Activated naive CD4-positive, alpha-beta T cell treated with anti-CD3 and anti-CD28 coated beads, Interleukin-2, amount 10 ng/mL, durations not matched to agents 7 days and 5 days (primary cell): ENCODE measurements at regions of chr13 and their contacts with region 1.

Region 1: GRCh38 chr13:41054212-41054877 is 7.0 kb upstream of the WBP4 start:
- DNase-seq: peak; percentile 53
- H3K4me3 Mint-ChIP-seq: no peak overlapping the region
- H3K27ac Mint-ChIP-seq: no peak overlapping the region
- H3K4me1 Mint-ChIP-seq: peaks cover 46% of the 10 kb centered on the region
- H3K27me3 Mint-ChIP-seq: no peaks in the 10 kb centered on the region

Region 2: DNA sequence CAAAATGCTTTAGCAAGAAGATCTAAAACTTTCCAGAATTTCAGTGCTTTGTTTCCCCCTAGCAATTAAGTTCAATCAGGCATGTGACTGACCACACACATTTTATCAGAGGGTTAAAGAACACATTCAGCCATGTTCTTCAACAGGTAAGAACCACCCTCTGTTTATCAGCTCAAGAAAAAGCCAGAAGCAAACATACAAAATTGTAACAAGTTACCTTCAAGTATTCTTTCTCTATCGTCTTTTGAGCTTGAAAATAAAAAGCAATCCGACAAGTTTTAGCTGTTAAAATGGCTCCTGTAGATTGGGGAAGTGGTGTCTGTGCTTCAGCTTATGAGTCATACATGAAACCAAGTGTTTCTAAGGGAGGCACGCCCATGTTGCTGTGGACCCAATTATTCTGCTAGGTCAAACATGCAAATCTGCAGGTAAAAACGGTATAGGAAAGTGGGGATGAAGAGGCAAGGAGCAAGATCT is 35.3 kb before region 1 on chr13 and contains the start of gene ELF1:
- CTCF ChIA-PET with region 1: interaction called, 18 read pairs
- DNase-seq: peak; percentile 75
- H3K4me3 Mint-ChIP-seq: peak within 1 kb of the TSS; percentile 96
- H3K27ac Mint-ChIP-seq: peak within 1 kb of the TSS; percentile 99
- H3K4me1 Mint-ChIP-seq: peaks cover 47% of the 10 kb centered on the region
- H3K27me3 Mint-ChIP-seq: no peaks in the 10 kb centered on the region

Region 3: GRCh38 chr13:41222259-41222852 is 168.0 kb after region 1 on chr13:
- CTCF ChIA-PET with region 1: interaction called, 14 read pairs
- DNase-seq: peak; percentile 66
- H3K4me3 Mint-ChIP-seq: no peak overlapping the region
- H3K27ac Mint-ChIP-seq: no peak overlapping the region
- H3K4me1 Mint-ChIP-seq: no peaks in the 10 kb centered on the region
- H3K27me3 Mint-ChIP-seq: no peaks in the 10 kb centered on the region